Cardiac septum (tissue), 1 donor: ENCODE measurements at regions of chr14 and their contacts with region 1.

Region 1: GRCh38 chr14:94485944-94486841 is 10.2 kb upstream of the SERPINA9 start:
- DNase-seq: peak; percentile 83

Region 2: DNA sequence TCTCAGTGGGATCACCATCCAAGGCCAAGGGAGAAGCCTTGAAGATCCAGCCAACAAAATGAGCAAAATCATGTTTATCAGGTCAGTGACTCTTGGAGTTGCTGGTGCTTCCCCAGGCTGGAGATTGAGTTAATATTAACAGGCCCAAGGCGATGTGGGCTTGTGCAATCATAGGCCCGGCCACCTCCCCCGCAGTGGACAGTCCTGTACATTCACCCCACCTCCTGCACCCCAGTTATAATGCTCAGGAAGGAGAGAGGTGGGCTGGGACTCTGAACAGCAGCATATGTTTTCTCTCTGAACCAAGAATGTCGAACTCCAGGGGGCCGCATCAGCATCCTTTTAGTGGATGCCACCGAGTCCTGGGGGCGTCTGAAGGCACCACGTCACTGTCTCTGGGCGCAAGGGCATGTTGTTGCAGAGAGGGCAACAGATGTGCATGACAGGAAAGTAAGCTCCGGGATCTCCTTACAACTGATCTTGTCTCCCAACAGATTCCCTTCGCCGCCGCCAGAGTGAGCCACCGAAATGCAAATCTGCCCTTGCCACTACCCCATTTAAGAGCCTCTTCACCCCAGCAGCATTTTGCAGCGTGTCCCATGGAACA is 130.9 kb before region 1 on chr14:
- intact Hi-C with region 1: loop called (anchors 5 kb)
- DNase-seq: peak; percentile 90

Region 3: DNA sequence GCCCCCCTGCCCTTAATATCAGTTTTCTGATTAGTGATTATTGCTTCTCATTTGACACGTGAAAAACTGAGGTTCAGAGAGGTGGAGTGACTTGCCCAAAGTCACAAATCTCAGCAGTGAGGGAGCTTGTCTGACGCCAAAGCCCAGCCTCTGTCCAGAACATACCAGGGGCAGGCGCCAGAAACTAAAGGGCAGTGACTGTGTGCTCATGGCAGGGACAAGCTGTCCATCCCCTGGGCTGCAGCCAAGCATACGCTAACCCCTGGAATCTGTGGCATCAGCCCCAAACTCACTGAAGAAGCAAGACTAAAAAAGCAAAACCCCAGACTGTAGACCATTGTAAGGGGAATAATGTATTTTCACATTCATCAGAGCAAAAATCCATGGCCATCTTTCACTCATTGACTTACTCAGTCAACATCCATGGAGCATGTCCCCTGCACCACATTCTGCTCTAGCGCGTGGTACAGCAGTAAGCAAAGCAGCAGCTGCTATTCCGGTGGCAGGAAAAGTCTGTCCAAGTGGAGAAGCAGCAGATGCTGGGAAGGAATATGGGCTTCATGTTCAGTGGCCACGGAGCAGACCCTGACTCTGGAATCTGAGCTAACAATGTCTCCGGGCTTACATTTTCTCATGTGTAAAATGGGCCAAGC is 73.6 kb after region 1 on chr14:
- intact Hi-C with region 1: no loop called
- DNase-seq: peak; percentile 43